Naive thymus-derived CD4-positive, alpha-beta T cell (primary cell): ENCODE measurements at regions of chr17 and their contacts with region 1.

Region 1: DNA sequence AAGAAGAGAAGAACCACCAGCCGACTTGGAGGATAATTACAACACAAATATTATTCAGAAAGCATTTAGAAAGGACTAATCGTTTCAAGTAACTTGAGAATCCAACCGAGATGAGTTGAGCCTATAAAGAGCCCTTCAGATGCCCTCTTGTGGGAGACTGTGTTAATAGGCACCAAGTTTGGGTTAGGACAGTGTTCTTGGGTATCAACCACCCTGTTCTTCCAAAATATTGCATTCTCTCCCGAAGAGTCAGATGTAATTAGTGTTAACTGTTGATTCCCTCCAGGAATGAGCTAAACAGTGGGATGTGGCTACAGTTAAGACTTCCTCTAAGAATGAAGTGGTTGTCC is 87.8 kb upstream of the NOL11 start:
- DNase-seq: peak in 6 of 9 donors; percentile 4 to 38 (median 24)
- ATAC-seq: peak; percentile 45
- H3K4me3 ChIP-seq: no peak overlapping the region
- H3K4me3 Mint-ChIP-seq: no peak overlapping the region
- H3K27ac ChIP-seq: no peak overlapping the region
- H3K27ac Mint-ChIP-seq: peak overlapping the region in 3 of 9 donors; percentile 22 to 59 (median 42)
- H3K4me1 ChIP-seq: no peaks in the 10 kb centered on the region
- H3K4me1 Mint-ChIP-seq: peaks cover 5 to 17% (median 13%) of the 10 kb centered on the region in 7 donors
- H3K27me3 ChIP-seq: no peaks in the 10 kb centered on the region
- H3K27me3 Mint-ChIP-seq: no peaks in the 10 kb centered on the region

Region 2: DNA sequence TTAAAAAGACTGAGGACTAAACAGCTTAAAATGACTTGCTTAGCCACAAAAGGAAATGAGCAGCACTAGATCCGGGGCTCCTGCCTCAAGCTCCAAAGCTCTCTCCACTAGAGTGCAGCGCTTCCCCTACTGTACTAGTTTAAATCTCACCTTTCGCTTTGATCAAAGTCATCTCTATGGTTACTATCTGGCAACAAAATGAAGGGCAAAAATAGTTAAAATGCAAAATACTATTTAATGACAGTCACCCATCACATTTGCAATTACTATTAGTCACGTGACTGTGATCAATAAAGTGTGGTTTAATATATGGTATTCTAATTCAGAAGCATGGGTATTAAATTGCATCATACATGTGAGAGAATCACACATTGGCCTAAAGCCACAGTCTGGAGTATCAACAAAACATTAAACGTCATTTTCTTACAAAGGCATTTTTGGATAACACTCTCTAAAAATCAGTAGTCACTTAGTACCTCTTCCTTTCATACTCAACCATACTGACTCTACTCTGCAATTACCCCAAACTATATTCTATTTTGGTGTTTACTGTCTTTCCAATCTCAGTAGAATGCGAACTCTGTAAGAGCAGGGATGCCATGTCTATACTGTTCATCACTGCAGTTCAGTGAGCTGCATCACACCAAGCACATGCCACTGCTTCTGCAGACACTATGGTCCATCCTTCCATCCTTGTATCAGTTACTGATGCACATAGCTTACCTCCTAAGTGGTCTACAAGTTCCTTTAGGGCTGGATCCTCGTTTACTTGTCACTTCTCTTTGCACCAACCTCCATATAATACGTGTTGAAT is 269.8 kb before region 1 on chr17:
- CTCF ChIA-PET with region 1: interaction called, 5 read pairs
- POLR2A ChIA-PET with region 1: no interaction called
- intact Hi-C with region 1: loop called in 1 of 2 experiments (anchors 1 kb)
- DNase-seq: peak in 7 of 9 donors; percentile 54 to 78 (median 70)
- ATAC-seq: peak; percentile 97
- H3K4me3 ChIP-seq: no peak overlapping the region
- H3K4me3 Mint-ChIP-seq: peak overlapping the region; percentile 6 to 77 (median 49)
- H3K27ac ChIP-seq: peak overlapping the region; percentile 58
- H3K27ac Mint-ChIP-seq: peak overlapping the region; percentile 60 to 94 (median 80)
- H3K4me1 ChIP-seq: peaks cover 33 to 39% of the 10 kb centered on the region in 2 donors
- H3K4me1 Mint-ChIP-seq: peaks cover 47 to 81% (median 60%) of the 10 kb centered on the region in 7 donors
- H3K27me3 ChIP-seq: no peaks in the 10 kb centered on the region
- H3K27me3 Mint-ChIP-seq: no peaks in the 10 kb centered on the region